AG04449 (cell line): ENCODE measurements at regions of chr11 and their contacts with region 1.

Region 1: DNA sequence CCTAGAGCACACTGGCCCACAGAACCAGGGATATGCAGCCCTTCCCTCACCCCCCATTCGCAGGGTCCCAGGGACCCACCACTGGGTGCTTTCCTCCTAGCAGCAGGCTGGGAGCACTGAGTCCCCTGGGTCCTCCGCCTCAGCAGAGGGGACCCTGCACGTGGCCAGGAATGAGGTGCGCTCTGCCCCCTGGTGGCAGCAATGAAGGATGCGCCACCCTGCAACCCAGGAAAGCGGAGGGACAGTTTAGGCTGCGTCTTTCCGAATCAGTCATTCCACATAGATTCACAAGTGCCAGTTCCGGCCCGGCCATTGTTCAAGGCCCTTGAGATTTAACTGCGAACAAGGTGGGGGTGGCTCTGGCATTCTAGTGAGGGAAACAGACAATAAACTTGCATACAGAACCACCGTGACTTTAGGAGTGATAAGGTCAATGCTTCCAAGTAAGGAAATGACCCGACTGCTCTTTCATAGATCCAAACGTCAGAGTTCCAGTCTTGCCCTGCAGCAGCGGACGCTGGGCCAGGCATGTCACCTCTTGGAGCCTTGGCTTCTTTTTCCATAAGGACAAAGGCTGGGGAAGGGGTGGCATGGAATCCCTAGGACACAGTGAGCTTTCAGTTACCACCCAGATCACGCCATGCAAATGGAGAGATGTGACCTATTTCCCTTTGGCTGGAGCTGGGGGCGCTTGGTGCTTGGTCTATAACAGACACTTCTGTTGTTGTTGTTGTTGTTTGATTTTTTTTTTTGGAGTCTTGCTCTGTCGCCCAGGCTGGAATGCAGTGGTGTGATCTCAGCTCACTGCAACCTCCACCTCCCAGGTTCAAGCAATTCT is 7.7 kb downstream of the RIN1 start:
- DNase-seq: no peak
- H3K4me3 ChIP-seq: no peak overlapping the region
- CTCF ChIP-seq: peak; percentile 91

Region 2: GRCh38 chr11:66317723-66318599 is 10.6 kb before region 1 on chr11:
- CTCF ChIA-PET with region 1: interaction called, 231 read pairs
- POLR2A ChIA-PET with region 1: interaction called, 106 read pairs
- DNase-seq: no peak
- H3K4me3 ChIP-seq: peak overlapping the region; percentile 36
- CTCF ChIP-seq: no peak

Region 3: DNA sequence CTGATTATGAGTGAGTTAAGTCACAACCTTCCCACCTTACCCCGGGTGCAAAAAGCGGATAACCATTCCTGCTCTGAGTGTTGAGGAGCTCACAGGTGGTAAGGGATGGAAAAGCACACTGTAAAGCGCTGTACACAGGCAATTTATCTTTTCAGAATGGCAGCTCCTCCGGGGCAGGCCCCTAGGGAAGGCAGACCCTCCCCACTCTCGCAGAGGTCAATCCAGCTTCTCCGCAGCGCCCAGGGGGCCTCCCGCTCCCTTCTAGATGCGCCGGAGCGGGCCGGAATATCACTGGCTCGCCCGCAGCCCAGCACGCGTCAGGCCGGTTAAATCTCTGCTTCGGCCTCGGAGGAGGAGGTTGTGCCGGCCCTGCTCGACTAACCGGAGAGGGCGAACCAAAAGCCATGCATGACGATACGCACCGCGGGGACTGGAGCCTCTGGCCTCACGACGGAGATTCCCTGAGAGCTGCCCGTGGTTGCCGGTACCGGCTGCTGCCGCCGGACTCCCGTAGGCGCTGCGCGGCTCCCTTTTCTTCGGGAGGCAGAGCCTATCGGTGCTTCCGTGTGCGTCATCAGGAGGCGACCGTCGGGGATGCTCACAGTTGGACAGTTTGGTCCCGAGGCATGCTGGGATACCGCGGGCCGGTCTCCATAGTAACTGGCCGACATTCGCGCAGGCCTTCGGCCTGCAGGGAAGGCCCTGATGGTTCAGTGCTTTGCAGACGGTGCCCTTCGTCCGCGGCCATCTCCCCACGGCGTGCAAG is 16.2 kb after region 1 on chr11 and contains the start of gene BRMS1:
- CTCF ChIA-PET with region 1: interaction called, 10 read pairs
- POLR2A ChIA-PET with region 1: interaction called, 4 read pairs
- DNase-seq: peak; percentile 79
- H3K4me3 ChIP-seq: peak within 1 kb of the TSS; percentile 99
- CTCF ChIP-seq: no peak

Region 4: GRCh38 chr11:66371627-66372415 is 43.3 kb after region 1 on chr11 and contains the start of gene SLC29A2:
- CTCF ChIA-PET with region 1: no interaction called
- POLR2A ChIA-PET with region 1: no interaction called
- DNase-seq: no peak
- H3K4me3 ChIP-seq: peak within 1 kb of the TSS; percentile 61
- CTCF ChIP-seq: no peak